ENCODE measurements at regions of chr16 and their contacts with region 1.

Region 1: DNA sequence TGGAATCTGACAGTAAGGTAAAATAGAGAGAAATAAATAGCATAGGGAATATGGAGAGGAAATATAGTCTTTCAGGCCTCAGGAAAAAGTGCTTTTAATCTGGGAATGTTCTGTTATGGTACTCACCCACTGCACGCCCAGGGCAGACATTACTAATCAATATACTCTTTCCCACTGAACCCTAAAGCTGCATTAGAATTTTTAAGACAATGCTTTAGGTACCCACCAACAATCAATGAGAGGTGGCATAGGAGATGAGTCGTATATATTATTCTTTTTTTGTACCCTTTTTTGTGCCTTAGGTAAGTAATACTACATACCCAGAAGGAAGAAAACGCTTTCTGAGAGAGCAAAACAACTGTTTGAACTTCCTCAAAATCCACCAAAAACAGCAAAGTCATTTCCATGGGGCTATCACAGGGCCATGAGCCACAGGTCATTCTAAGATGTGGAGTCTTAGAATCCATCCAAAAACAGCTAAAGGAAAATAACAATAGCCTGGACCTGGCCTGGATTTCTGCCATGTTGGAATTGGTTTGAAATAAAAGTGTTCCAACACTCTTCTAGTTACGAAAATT is 542.1 kb downstream of the XYLT1 start:
- DNase-seq: no peak
- H3K4me3 ChIP-seq: no peak overlapping the region
- H3K27ac ChIP-seq: no peak overlapping the region
- H3K4me1 ChIP-seq: no peaks in the 10 kb centered on the region
- H3K27me3 ChIP-seq: no peaks in the 10 kb centered on the region; the same call in 1 of the 2 replicates

Region 2: DNA sequence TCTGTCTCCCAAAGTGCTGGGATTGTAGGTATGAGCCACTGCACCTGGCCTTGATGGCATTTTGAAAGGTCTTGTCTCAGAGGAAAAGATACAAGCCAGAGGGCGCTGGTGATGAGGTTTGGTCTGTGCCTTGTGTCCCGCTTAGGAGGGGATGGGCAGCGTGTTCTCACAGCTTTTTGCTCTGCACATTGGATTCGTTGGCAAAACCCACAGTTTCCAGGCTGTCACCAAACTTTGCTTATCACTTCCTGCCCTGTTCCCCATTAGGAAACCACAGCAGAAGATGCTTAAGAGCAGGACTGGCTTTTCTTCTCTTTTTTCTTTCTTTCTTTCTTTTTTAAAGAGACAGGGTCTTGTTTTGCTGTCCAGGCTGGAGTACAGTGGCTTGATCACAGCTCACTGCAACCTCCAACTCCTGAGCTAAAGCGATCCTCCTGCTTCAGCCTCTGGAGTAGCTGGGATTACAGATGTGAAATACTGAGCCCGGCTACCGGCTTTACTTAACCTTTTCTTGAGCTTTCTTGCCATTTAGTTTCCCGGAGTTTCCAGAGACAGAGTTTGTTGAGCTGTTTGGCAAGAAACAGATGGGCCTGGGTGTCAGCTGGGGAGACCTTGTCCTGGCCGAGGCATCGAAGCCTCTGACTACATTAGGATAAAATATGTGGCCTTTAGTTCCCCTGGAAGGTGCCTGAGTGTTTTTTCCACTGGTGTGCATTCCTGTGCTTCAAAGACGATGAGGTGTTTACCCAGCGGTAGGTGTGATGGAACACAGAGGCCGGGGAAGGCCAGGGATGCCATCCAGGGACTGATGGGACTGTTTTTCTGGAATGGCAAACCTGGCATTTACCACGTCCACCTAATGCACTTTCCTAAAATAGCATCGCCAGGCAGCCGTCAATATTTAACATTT is 866.3 kb before region 1 on chr16:
- in situ Hi-C with region 1: no loop called
- DNase-seq: no peak
- H3K4me3 ChIP-seq: no peak overlapping the region
- H3K27ac ChIP-seq: no peak overlapping the region
- H3K4me1 ChIP-seq: no peaks in the 10 kb centered on the region
- H3K27me3 ChIP-seq: no peaks in the 10 kb centered on the region

Region 3: GRCh38 chr16:16982614-16983013 is 54.0 kb after region 1 on chr16:
- in situ Hi-C with region 1: loop called (anchors 10 kb)
- DNase-seq: no peak
- H3K4me3 ChIP-seq: no peak overlapping the region
- H3K27ac ChIP-seq: no peak overlapping the region
- H3K4me1 ChIP-seq: no peaks in the 10 kb centered on the region
- H3K27me3 ChIP-seq: no peaks in the 10 kb centered on the region

Region 4: DNA sequence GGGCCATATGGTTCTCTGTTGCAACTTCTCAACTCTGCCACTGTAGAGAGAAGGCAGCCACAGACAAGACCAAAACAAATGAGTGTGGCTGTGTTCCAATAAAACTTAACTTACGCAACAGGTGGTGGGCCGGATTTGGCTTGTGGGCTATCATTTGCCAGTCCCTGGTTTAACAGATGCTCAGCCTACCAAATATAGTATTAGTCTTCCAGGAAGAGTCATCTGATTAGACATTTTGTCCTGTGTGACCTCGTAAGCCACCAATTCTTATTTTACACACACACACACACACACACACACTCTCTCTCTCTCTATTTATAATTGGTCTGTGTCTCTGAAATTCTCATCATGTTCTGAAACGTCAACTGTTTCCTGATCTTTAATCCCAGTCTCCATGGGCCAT is 296.3 kb after region 1 on chr16:
- in situ Hi-C with region 1: no loop called
- DNase-seq: peak; percentile 78
- H3K4me3 ChIP-seq: no peak overlapping the region; the same call in 1 of the 2 replicates
- H3K27ac ChIP-seq: peak overlapping the region; percentile 40
- H3K4me1 ChIP-seq: peaks cover 19% of the 10 kb centered on the region
- H3K27me3 ChIP-seq: no peaks in the 10 kb centered on the region

Measured in GM23248 (cell line).